Left lung (tissue), 14 donors: ENCODE measurements at regions of chr4 and their contacts with region 1.

Region 1: DNA sequence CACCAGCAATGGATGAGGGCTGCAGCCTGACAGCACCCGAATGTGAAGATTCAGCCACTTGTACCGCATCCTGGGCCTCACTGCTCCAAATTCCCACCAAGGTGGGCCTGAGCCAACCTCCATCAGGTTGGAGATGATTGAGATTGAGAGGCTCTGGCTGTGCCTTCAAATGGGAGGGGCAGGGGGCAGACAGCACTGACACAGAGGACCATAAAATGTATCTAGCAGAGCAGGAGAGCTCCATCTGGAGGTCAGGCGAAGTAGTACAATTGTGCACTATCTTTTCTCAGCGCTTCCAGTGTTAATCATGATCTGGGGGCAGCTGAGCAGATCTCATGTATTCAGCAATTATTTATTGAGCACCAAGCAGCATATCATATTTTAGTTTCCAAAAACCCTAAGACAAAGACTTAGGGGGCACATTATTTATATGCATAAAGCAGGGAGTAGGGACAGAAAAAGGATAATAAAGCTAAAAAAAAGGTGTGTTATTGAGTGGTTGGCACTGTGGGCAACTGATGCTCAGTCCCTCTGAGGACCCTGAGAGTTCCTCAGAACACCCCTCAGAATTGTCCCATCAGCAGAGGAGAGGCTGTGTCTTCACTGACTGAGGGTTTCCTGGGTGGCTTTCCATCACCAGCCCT is 31.6 kb upstream of the C1QTNF7 start:
- DNase-seq: peak in 1 of 4 donors; percentile 39
- ATAC-seq: peak; percentile 60
- H3K4me3 ChIP-seq: no peak overlapping the region
- H3K27ac ChIP-seq: no peak overlapping the region
- H3K4me1 ChIP-seq: peaks cover 8 to 15% of the 10 kb centered on the region in 2 donors
- H3K27me3 ChIP-seq: no peaks in the 10 kb centered on the region
- CTCF ChIP-seq: peak; percentile 57 to 65

Region 2: GRCh38 chr4:15231265-15232091 is 164.8 kb before region 1 on chr4:
- intact Hi-C with region 1: loop called in 1 of 2 experiments (anchors 10 kb)
- DNase-seq: peak in 3 of 4 donors; percentile 68 to 86 (median 73)
- ATAC-seq: peak; percentile 91
- H3K4me3 ChIP-seq: no peak overlapping the region
- H3K27ac ChIP-seq: no peak overlapping the region
- H3K4me1 ChIP-seq: peaks cover 7 to 20% of the 10 kb centered on the region in 2 donors
- H3K27me3 ChIP-seq: no peaks in the 10 kb centered on the region
- CTCF ChIP-seq: peak; percentile 66 to 70

Region 3: DNA sequence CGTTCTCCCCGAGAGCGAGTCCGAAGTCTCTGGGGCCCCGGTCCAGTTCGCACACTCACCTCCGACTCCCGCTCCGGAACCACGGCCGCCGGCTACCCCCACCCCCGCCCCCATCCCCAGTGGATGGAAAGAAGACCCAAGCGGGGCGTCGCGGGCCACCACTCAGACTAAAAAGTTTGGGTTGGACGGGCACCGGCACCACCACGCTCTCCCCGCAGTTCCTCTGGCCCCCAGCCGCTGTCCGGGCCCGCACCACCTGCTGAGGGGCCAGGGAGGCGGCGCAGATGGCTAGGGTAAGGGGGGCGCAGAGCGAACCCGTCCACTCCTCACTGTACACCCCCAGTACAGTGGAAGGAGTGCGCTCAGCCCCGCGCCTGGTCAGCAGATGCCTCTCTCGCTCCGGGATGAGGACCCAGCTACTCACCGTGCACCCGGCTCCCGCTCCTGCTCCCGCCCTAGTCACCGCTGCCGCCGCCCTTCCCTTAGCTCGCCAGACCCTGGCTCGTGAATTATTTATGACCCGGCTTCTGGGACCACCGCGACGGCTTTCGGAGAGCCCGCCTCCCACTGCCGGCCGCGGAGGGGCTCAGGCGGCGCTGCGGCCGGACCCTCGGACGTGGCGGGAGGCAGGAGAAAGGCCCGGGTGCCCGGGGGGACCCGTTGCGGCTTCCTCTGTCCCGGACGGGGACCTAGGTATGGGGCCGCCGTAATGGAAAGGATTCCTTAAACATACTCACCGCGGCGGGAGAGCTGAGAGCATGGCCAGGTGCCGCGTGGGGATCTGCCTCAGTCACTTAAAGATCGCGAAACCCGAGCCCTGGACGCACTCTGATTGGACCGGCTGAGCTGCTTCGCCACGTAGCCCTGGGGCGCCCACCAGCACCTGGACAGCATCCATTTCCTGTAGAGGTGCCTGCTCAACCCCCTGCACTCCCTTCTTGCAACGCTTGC is 687.2 kb after region 1 on chr4 and contains the start of gene PROM1:
- intact Hi-C with region 1: no loop called
- DNase-seq: peak in 3 of 4 donors; percentile 35 to 79 (median 52)
- ATAC-seq: peak; percentile 78
- H3K4me3 ChIP-seq: peak within 1 kb of the TSS; percentile 18 to 36
- H3K27ac ChIP-seq: no peak within 1 kb of the TSS
- H3K4me1 ChIP-seq: peaks cover 13 to 26% of the 10 kb centered on the region in 2 donors
- H3K27me3 ChIP-seq: peaks cover 46 to 60% of the 10 kb centered on the region in 2 donors
- CTCF ChIP-seq: no peak
- polyA plus RNA-seq, gene PROM1: 18.6 to 37.1 (median 27.9) TPM